Gastrocnemius medialis (tissue), 4 donors: ENCODE measurements at regions of chr1 and their contacts with region 1.

Region 1: DNA sequence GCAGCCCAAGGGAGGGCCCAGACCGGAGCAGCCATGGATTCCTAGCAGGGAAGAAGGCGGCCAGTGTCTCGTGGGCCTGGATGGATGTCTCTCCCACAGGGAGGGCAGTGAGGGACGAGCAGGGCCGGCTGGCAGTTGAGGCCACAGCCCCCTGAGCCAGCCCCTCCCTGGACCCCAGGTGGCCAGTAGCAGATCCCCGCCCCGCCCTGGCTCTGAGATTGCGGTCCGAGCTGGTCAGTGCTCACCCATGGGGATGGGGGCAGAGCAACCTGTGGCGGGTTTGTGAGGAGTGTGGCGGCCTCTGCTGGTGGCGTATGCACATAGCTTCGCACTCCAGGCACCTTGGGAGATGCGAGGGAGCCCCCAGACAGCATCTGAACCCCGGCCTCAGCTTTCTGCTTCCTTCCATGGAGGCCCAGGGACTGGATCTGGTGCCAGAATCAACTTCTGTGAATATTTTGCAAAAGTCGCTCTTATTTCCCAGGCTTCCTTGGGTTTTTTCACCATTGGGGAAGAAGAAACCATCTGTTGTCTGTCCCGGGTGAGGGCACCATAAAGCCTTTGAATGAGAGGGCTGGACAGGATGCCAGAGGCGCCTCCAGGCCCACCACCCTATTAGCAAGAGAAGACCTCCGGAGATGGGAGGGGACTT is 8.4 kb upstream of the KCNN3 start:
- DNase-seq: peak; percentile 65 to 79
- ATAC-seq: peak; percentile 80 to 84
- H3K4me3 ChIP-seq: no peak overlapping the region
- H3K27ac ChIP-seq: peak overlapping the region in 3 of 4 donors; percentile 29 to 69 (median 58)
- H3K4me1 ChIP-seq: peaks cover 3 to 4% of the 10 kb centered on the region in 2 donors
- H3K27me3 ChIP-seq: no peaks in the 10 kb centered on the region
- CTCF ChIP-seq: peak; percentile 82 to 96 (median 90)
- POLR2A ChIP-seq: no peak

Region 2: DNA sequence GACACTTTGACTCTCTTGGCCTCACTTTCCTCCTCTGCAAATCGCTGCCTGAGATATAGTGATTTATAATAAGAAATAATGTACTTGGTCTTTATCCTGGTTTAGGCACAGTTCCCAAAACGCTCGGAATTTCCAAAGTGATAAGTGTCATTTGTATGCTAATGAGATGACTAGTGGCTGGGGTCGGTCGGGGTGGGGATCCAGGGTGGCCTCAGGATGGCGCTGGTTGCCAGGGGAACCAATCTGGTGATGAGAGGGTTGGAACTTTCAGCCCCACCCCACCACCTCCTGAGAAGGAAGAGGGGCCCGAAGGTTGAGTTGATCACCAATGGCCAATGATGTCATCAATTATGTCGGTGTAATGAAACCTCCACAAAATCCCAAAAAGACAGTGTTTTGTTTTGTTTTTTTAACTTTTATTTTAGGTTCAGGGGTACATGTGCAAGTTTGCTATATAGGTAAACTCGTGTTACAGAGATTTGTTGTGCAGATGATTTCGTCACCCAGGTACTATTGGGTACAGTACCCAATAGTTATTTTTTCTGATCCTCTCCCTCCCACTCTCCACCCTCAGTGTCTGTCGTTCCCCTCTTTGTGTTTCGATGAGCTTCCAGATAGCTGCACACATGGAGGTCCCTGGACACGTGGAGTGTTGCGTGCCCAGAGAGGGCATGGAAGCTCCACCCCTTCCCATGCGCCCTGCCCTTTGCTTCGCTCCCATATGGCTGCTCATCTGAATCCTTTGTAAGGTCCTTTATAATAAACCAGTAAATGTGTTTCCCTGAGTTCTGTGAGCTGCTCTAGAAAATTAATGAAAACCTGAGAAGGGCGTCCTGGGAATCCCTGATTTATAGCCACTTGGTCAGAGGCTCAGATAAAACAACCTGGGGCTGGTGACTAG is 105.6 kb before region 1 on chr1:
- in situ Hi-C with region 1: no loop called
- intact Hi-C with region 1: loop called (anchors 2 kb)
- DNase-seq: no peak
- ATAC-seq: no peak
- H3K4me3 ChIP-seq: no peak overlapping the region
- H3K27ac ChIP-seq: no peak overlapping the region
- H3K4me1 ChIP-seq: peaks cover 5 to 10% of the 10 kb centered on the region in 2 donors
- H3K27me3 ChIP-seq: no peaks in the 10 kb centered on the region
- CTCF ChIP-seq: no peak
- POLR2A ChIP-seq: no peak

Region 3: DNA sequence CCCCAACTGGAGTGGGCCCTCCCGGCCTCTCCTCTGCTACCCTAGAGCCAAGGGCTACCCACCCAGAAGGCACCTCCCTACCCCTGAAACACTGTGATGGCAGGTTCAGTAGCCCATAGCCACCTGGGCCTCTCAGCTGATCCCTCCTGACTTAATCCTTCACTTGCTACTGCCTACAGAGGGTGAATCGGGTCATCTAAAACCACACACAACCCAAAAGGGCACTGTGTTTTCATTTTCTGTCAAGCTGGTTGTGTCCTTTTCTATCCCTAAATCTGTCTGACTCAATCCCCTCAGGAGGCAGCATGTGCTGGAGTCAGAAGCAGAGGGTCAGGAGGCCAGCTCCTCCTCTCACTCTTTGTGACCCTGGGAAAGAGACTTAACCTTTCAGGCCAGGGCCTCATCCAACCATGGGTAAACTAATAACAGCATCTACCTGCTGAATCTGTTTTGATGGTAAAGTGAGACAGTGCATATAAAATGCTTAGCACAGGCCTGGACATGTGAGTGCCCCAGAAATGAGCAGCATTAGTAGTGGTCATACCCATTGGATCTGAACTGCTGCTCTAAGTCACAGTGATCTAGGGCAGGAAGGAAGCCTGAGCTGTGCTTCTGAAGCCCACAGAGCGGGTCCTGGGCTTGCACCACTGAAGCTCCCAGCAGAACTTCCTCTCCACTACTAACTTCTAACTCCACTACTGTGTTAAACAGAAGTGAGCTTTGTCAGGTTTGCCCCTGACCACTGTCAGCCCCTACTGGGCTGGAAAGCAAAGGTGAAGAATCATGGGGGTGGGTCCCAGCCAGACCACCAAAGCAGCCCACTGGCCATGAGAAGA is 47.1 kb after region 1 on chr1:
- in situ Hi-C with region 1: no loop called
- intact Hi-C with region 1: no loop called
- DNase-seq: no peak
- ATAC-seq: no peak
- H3K4me3 ChIP-seq: no peak overlapping the region
- H3K27ac ChIP-seq: no peak overlapping the region
- H3K4me1 ChIP-seq: no peaks in the 10 kb centered on the region
- H3K27me3 ChIP-seq: no peaks in the 10 kb centered on the region
- CTCF ChIP-seq: no peak
- POLR2A ChIP-seq: no peak